ENCODE measurements at regions of chr1 and their contacts with region 1.

Region 1: GRCh38 chr1:201559679-201560162 is 20.8 kb downstream of the NAV1 start:
- DNase-seq: peak; percentile 93
- H3K4me3 ChIP-seq: no peak overlapping the region
- H3K27ac ChIP-seq: peak overlapping the region in 2 of 4 donors; percentile 11 to 41
- H3K4me1 ChIP-seq: peaks cover 0 to 80% (median 60%) of the 10 kb centered on the region in 4 donors
- H3K27me3 ChIP-seq: no peaks in the 10 kb centered on the region
- CTCF ChIP-seq: peak; percentile 95 to 99 (median 98)
- EP300 ChIP-seq: no peak
- POLR2A ChIP-seq: no peak

Region 2: DNA sequence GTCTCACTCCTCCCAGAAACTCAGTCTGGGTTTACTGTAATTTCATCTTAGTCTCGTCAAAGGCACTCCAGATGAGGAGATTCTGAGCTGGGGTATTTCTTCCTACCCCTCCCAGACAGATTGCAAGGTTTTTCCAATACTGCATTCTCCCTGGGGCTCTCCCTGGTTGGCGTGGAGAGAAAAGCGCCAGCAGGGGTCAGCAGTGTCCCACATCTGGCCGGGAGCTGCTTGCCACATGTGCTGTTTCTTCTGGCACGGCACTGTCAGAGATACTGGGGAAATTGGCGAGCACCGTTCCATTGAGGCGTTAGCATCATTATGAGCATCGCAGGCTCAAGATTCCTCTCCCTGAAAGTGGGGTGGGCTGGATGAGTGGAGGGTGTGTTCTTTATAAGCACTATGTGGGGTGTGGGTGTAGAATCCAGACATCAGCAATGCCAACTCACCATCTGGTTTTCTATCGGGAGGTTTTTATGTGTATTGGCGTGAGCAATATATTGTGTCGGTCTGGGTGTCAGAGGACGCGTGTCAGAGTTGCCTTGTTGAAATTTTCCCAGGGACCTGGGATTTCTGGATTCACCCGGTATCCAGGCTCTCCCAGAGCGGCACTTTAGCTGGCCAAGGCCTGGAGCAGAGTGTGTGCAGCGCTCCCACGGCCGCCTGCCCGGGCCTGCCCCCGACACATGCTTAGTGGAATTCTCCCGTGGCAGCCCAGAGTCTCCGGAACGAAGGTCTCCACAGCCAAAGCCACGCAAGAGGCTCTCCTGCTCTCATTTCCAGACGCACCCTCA is 28.8 kb before region 1 on chr1:
- intact Hi-C with region 1: loop called (anchors 2 kb)
- DNase-seq: peak; percentile 96
- H3K4me3 ChIP-seq: no peak overlapping the region
- H3K27ac ChIP-seq: peak overlapping the region; percentile 10 to 95 (median 53)
- H3K4me1 ChIP-seq: peaks cover 0 to 49% (median 45%) of the 10 kb centered on the region in 4 donors
- H3K27me3 ChIP-seq: no peaks in the 10 kb centered on the region
- CTCF ChIP-seq: peak; percentile 77 to 88 (median 86)
- EP300 ChIP-seq: no peak
- POLR2A ChIP-seq: no peak

Region 3: GRCh38 chr1:201649761-201650622 is 90.3 kb after region 1 on chr1:
- intact Hi-C with region 1: loop called (anchors 2 kb)
- DNase-seq: peak; percentile 93
- H3K4me3 ChIP-seq: peak overlapping the region; percentile 22 to 60 (median 56)
- H3K27ac ChIP-seq: peak overlapping the region; percentile 72 to 78 (median 76)
- H3K4me1 ChIP-seq: peaks cover 0 to 46% (median 44%) of the 10 kb centered on the region in 4 donors
- H3K27me3 ChIP-seq: no peaks in the 10 kb centered on the region
- CTCF ChIP-seq: peak in 1 of 4 experiments; percentile 5
- EP300 ChIP-seq: no peak
- POLR2A ChIP-seq: peak in 1 of 2 donors; percentile 60

Region 4: GRCh38 chr1:201703621-201704439 is 144.1 kb after region 1 on chr1:
- intact Hi-C with region 1: loop called (anchors 1 kb)
- DNase-seq: peak; percentile 94
- H3K4me3 ChIP-seq: no peak overlapping the region
- H3K27ac ChIP-seq: peak overlapping the region; percentile 65 to 76 (median 70)
- H3K4me1 ChIP-seq: peaks cover 0 to 37% (median 29%) of the 10 kb centered on the region in 4 donors
- H3K27me3 ChIP-seq: no peaks in the 10 kb centered on the region
- CTCF ChIP-seq: peak; percentile 82 to 96 (median 94)
- EP300 ChIP-seq: no peak
- POLR2A ChIP-seq: no peak

Region 5: DNA sequence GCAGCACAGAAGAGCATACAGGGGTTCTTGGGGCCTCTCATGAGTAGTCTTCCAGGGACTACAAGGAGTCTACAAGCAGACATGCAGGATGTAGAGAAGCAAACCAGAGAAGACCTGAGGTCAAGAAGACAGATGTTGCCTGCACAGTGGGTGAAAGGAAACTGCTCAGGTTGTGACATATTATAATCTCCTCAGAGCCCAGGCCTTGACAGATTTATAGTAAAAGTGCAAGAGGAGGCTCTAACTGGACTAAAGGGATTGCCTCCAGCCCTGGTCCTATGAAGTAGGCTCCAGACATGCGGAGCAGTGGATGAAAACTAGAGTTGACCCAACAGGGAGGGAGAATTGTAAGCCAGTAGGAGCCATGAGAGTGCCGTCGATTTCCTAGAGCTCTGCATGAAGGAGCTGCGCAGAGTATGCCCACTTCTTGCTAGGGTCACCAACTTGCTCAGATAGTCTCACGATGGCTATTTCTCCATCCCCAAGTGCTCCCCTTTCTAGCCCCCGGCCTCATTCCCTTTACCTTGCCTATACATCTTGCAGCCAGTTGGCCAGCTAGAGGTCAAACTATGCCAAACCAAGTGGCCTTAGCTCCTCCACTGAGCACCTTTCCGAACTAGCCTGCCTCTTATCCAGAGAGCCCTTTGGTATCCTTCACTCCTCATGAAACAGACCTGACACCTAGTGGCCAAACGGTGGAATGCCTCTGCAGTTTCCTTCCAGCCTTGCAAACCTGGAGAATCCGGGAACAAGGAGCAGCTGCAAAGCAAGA is 233.0 kb after region 1 on chr1:
- intact Hi-C with region 1: loop called (anchors 1 kb)
- DNase-seq: peak; percentile 90
- H3K4me3 ChIP-seq: no peak overlapping the region
- H3K27ac ChIP-seq: peak overlapping the region; percentile 59 to 76 (median 65)
- H3K4me1 ChIP-seq: peaks cover 0 to 38% (median 36%) of the 10 kb centered on the region in 4 donors
- H3K27me3 ChIP-seq: no peaks in the 10 kb centered on the region
- CTCF ChIP-seq: peak; percentile 89 to 99 (median 97)
- EP300 ChIP-seq: no peak
- POLR2A ChIP-seq: no peak